Endothelial cell of umbilical vein (primary cell): ENCODE measurements at regions of chr11 and their contacts with region 1.

Region 1: DNA sequence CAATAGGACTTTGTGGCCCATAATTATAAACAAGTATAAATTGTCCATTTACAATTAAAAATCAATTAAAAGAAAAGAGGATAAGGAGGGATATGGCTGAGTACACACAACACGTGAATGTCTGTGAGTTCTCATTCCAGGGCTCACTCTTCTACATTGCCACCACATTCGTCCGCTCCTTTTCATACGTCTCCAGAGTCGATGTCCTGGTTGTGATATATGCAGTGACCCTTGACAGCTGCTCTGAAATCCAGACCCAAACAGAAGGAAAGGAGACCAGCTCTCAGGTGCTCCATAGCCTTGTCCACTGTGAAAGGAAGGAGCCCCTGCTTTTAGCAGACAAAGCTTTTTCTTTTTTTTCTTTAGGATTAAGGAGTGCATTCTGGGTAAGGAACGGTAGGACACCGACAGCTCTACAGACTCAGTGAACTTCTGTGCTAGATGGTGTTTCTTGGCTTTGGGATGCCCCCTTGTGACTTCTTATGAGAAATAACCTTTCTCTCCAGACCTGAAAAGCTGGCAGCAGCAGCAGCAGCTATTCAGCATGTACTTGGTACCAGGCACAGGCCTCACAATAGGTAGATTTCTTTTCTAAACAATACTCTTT is 19.7 kb upstream of the DNAJB13 start:
- DNase-seq: peak; percentile 76
- H3K4me3 ChIP-seq: no peak overlapping the region
- H3K27ac ChIP-seq: no peak overlapping the region
- H3K4me1 ChIP-seq: no peaks in the 10 kb centered on the region
- H3K27me3 ChIP-seq: no peaks in the 10 kb centered on the region
- CTCF ChIP-seq: peak; percentile 37 to 55
- POLR2A ChIP-seq: no peak

Region 2: GRCh38 chr11:73404048-73404447 is 527.1 kb before region 1 on chr11:
- CTCF ChIA-PET with region 1: interaction called, 8 read pairs
- POLR2A ChIA-PET with region 1: no interaction called
- dilution Hi-C with region 1: no loop called
- intact Hi-C with region 1: loop called (anchors 5 kb)
- DNase-seq: peak; percentile 53
- H3K4me3 ChIP-seq: no peak overlapping the region
- H3K27ac ChIP-seq: no peak overlapping the region
- H3K4me1 ChIP-seq: peaks cover 4% of the 10 kb centered on the region
- H3K27me3 ChIP-seq: no peaks in the 10 kb centered on the region
- CTCF ChIP-seq: peak; percentile 44 to 68
- POLR2A ChIP-seq: no peak

Region 3: DNA sequence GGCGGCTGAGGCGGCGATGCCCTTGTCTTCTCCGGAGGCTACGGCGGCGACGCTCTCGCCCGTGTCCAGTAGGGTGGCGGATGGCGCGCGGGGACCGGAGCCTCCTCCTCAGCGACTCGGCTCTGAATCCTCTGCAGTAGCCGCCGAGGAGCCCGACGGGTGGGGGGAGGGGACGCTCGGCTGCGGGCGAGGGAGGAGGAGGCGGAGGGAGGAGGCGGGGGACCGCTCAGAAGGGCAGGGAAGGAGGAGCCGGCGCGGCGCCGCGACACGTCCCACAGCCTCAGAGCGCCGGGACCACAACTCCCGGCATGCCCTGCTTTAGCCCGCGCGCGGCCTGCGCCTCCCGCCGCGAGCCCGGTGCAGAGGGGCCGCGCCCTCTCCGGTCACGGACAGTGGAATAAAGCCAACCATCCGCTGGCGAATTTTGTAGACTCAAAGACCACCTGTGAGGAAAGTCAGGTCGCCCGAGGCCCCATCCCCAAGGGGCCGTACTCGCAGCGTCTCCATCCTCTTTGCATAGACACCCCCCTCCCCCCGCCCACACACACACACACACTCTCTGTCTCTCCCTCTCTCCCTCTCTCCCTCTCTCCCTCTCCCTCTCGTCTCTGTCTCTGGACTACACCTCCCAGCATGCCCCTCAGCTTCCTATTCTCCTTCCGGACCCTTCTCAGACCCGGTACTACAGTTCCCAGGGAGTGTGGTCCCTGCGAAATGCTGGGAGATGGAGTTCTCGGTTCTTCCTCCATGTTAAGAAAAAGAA is 333.0 kb before region 1 on chr11 and contains the start of gene FAM168A:
- CTCF ChIA-PET with region 1: interaction called, 4 read pairs
- POLR2A ChIA-PET with region 1: no interaction called
- dilution Hi-C with region 1: no loop called
- intact Hi-C with region 1: loop called (anchors 1 kb)
- DNase-seq: peak; percentile 95
- H3K4me3 ChIP-seq: peak within 1 kb of the TSS; percentile 70 to 97 (median 74)
- H3K27ac ChIP-seq: no peak within 1 kb of the TSS
- H3K4me1 ChIP-seq: peaks cover 9% of the 10 kb centered on the region
- H3K27me3 ChIP-seq: no peaks in the 10 kb centered on the region
- CTCF ChIP-seq: peak; percentile 3 to 10
- POLR2A ChIP-seq: peak; percentile 83
- total RNA-seq, gene FAM168A: 20.5 and 22.5 TPM in 2 replicates

Region 4: DNA sequence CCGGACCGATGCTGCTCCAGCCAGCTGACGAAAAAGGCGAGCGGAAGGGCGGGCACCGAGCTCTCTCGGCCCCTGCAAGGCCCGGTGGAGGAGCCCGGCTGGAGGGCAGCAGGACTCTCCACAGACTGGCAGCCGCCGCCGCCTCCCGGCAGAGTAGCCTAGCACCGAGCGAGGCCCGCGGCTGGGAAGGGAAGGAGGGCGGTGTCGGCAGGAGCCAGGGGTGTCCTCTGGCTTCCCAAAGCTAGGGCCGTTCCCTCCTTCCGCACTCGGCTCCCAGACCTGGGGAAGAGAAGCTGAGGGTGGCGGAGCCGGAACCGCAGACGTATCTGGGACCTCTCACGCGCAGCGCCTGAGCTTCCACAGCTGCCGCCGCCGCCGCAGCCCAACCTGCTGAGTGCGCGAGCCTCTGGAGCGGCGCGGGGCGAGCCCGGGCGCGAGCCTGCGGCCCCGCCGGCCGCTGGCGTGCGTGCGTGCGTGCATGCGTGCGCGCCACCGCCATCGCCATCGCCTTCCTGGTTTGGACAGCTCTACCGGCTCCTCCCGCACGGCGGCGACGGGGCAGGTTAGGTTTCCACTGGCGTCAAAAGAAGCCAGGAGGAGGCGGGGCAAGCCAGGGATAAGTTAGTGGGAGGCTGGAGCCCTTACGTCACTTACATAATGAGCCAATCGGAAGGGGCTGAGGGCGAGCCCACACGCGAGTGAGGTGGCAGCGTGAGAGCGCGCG is 170.3 kb before region 1 on chr11 and contains the start of gene RAB6A:
- CTCF ChIA-PET with region 1: interaction called, 4 read pairs
- POLR2A ChIA-PET with region 1: no interaction called
- dilution Hi-C with region 1: no loop called
- intact Hi-C with region 1: loop called (anchors 10 kb)
- DNase-seq: peak; percentile 100
- H3K4me3 ChIP-seq: peak within 1 kb of the TSS; percentile 85 to 95 (median 89)
- H3K27ac ChIP-seq: peak within 1 kb of the TSS; percentile 64
- H3K4me1 ChIP-seq: peaks cover 19% of the 10 kb centered on the region
- H3K27me3 ChIP-seq: peaks cover 0 to 2% of the 10 kb centered on the region in 2 experiments
- CTCF ChIP-seq: peak; percentile 6 to 32
- POLR2A ChIP-seq: peak; percentile 73
- total RNA-seq, gene RAB6A: 130 and 138 TPM in 2 replicates

Region 5: DNA sequence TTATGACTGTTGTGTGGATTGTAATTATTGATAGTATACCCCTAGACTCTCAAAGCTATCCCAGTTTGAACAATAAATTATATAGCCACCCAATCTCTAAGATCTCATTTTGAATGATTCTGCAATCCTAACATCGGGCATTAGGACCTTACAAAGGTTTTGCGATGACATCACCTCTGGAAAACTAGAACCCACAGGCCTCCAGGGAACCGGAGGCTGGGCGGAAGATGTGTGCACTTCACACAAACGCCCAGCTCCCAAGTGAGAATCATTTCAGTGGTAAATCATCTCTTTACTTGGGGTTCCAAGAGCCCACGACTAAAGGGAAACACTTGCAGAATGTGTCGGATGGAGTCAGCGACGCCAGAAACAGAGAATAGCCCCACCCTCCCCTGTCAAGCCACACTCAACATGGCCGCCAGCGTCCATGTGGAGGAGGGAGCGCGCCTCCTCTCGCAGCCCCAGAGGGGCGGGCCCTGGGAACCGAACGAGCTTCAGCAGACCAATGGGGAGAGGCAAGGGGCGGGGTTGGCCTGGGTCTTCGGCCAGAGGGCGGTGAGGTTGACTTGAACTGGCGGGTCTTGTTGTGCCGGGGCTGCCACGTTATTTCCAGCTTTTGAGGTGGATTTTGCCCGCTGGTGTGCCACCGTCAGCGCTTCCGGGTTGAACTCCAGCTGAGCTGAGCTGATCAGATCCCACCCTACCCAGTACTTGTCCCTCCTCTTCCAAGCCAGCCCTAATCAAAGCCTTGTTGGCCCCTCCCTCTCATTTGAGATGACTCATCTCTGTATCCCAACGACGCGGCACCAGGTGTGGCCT is 151.8 kb before region 1 on chr11:
- CTCF ChIA-PET with region 1: interaction called, 13 read pairs
- POLR2A ChIA-PET with region 1: no interaction called
- dilution Hi-C with region 1: no loop called
- intact Hi-C with region 1: no loop called
- DNase-seq: peak; percentile 99
- H3K4me3 ChIP-seq: peak overlapping the region; percentile 36 to 74 (median 46)
- H3K27ac ChIP-seq: peak overlapping the region; percentile 87
- H3K4me1 ChIP-seq: peaks cover 4% of the 10 kb centered on the region
- H3K27me3 ChIP-seq: no peaks in the 10 kb centered on the region
- CTCF ChIP-seq: no peak
- POLR2A ChIP-seq: peak; percentile 94

Region 6: DNA sequence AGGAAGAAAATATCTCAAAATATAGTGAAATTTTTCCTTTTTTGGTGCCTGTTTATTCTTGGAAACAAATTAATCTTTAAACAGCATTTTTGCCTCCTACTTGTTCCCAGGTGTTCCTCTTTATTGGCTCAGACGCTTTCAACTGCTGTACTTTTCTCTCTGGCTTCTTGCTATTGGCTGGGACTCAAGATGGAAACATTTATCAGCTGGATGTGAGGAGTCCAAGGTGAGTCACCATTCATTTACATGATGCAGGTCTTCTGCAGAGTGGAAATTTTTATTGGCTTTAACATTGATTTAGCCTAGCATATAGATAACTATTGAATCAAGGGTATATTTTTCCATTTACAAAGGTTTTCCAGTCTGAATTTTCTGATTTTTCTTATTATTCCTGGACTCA is 14.7 kb before region 1 on chr11:
- CTCF ChIA-PET with region 1: interaction called, 10 read pairs
- POLR2A ChIA-PET with region 1: no interaction called
- dilution Hi-C with region 1: no loop called
- intact Hi-C with region 1: no loop called
- DNase-seq: no peak
- H3K4me3 ChIP-seq: no peak overlapping the region
- H3K27ac ChIP-seq: no peak overlapping the region
- H3K4me1 ChIP-seq: no peaks in the 10 kb centered on the region
- H3K27me3 ChIP-seq: no peaks in the 10 kb centered on the region
- CTCF ChIP-seq: no peak
- POLR2A ChIP-seq: no peak

Region 7: GRCh38 chr11:73989156-73989555 is 58.0 kb after region 1 on chr11:
- CTCF ChIA-PET with region 1: no interaction called
- POLR2A ChIA-PET with region 1: no interaction called
- dilution Hi-C with region 1: no loop called
- intact Hi-C with region 1: no loop called
- DNase-seq: no peak
- H3K4me3 ChIP-seq: no peak overlapping the region
- H3K27ac ChIP-seq: no peak overlapping the region
- H3K4me1 ChIP-seq: peaks cover under 1% of the 10 kb centered on the region
- H3K27me3 ChIP-seq: peaks cover 0 to 3% of the 10 kb centered on the region in 2 experiments
- CTCF ChIP-seq: no peak
- POLR2A ChIP-seq: no peak